ENCODE measurements at regions of chr2 and their contacts with region 1.

Region 1: GRCh38 chr2:165203689-165204559 is at the start of gene SCN3A:
- DNase-seq: peak in 1 of 3 donors; percentile 42
- ATAC-seq: peak; percentile 64 to 83 (median 77)
- H3K4me3 ChIP-seq: no peak within 1 kb of the TSS
- H3K27ac ChIP-seq: no peak within 1 kb of the TSS
- H3K4me1 ChIP-seq: no peaks in the 10 kb centered on the region
- H3K27me3 ChIP-seq: no peaks in the 10 kb centered on the region
- CTCF ChIP-seq: peak; percentile 47 to 77 (median 70)
- POLR2A ChIP-seq: no peak
- total RNA-seq, gene SCN3A: 0.02 to 0.17 (median 0.06) TPM in 3 of 6 experiments, not detected in the others

Region 2: DNA sequence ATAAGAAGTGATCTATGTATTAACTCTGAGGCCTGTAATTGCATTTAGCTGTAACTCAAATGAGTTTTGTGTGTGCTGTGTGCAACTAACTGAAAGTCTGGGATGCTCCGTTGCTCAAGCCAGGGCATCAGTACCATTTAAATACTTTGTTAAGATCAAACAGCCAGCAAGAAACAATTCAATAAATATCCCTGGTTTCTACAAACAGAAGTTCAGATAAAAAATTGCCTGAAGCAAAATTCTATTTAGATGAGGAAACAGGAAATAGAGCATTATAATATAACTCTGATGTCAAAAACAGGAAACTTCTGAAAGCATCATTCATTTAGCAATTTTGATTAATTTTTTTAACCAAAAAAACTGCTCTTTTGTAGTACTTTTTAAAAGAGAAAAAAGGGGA is 229.7 kb before region 1 on chr2:
- intact Hi-C with region 1: no loop called
- DNase-seq: no peak
- ATAC-seq: no peak
- H3K4me3 ChIP-seq: no peak overlapping the region
- H3K27ac ChIP-seq: no peak overlapping the region
- H3K4me1 ChIP-seq: no peaks in the 10 kb centered on the region
- H3K27me3 ChIP-seq: no peaks in the 10 kb centered on the region
- CTCF ChIP-seq: no peak
- POLR2A ChIP-seq: no peak

Region 3: DNA sequence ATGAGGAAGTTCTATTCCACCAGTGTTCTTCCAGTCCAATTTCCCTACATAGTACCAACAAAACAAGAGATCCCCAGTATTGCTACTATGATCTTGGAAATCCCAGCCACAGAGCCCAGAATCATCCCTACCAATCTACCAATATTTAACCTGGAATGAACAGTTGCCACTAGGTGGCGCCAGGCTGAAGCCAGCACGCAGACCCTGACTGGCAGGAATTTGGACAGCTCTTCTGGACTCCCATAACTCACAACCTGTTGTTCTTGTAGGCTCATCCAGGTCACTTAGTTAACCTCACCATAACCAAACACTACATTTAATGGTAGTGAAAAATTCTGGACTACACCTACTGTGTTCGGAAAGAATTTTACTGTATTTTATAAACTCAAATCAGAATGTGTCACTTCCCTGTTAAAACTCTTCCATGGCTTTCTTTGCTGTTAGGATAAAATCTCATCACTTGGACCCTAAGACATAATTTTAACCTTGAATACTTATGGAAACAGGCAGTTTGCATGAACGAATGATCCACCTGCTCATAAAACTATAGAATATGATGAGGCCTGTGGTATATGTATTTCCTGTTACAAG is 188.8 kb before region 1 on chr2:
- intact Hi-C with region 1: loop called (anchors 10 kb)
- DNase-seq: peak; percentile 67 to 76 (median 71)
- ATAC-seq: peak; percentile 86 to 90 (median 88)
- H3K4me3 ChIP-seq: no peak overlapping the region
- H3K27ac ChIP-seq: no peak overlapping the region
- H3K4me1 ChIP-seq: peaks cover 0 to 13% (median 0%) of the 10 kb centered on the region in 4 donors
- H3K27me3 ChIP-seq: no peaks in the 10 kb centered on the region
- CTCF ChIP-seq: peak; percentile 68 to 95 (median 85)
- POLR2A ChIP-seq: no peak

Region 4: DNA sequence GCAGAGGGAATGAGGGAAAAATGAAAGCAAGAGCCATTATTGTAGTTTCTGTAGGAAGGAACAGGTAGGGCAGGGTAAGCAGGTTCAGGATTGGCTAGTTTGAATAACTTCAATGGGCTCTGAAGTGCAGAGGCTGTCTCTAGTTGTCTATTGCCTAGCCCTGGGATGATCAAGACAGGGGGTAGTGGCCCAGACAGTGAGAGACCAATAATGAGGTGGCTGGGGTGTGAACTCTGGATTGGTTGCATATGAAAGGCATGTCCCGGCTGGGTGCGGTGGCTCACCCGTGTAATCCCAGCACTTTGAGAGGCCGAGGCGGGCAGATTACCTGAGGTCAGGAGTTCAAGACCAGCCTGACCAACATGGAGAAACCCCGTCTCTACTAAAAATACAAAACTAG is 181.1 kb before region 1 on chr2:
- intact Hi-C with region 1: loop called (anchors 10 kb)
- DNase-seq: no peak
- ATAC-seq: no peak
- H3K4me3 ChIP-seq: no peak overlapping the region
- H3K27ac ChIP-seq: no peak overlapping the region
- H3K4me1 ChIP-seq: no peaks in the 10 kb centered on the region
- H3K27me3 ChIP-seq: no peaks in the 10 kb centered on the region
- CTCF ChIP-seq: no peak
- POLR2A ChIP-seq: no peak